ENCODE measurements at regions of chr7 and their contacts with region 1.

Region 1: DNA sequence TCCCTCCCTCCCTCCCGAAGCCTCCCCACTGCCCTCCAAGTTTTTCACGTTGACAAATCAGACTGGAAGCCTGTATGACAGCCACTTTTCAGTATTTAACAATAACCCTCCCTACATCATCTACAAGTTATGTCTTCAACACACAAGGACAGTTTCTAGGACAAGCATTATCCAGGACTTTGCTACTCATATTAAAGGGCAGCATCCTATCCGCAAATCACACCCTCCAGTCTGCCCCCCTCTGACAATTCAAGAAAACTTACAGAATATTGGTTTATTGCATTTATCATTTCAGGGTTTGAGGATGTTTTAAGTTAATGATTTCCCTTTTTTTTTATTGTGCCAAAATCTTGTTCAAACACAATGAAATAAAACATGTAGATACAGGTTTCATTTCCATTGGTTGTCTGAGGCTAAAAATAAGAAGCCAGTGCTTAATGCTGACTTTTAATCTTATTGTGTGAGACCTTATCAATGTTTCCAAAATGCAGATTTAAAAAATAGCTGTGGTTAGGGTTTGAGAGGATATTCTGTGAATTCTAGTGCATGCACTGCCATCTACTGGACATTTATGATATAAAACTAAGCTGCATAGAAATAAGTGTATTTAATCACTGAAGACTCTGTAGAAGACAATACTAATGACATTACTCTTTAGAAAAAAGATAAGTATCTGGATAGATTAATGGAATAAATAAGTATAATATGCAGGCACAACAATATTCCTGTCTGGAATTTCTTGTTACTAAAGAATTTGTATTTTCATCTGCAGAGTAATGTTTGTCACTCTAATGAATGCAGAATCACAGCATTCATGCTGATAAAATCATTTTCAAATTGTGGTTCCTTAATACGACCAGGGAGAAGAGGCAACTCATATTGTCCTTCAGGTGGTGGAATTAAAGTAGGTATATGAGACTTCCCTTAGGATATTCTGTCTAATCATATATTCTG is 64.1 kb downstream of the CAV1 start:
- DNase-seq: no peak
- H3K4me3 Mint-ChIP-seq: no peak overlapping the region
- H3K27ac Mint-ChIP-seq: no peak overlapping the region
- H3K4me1 Mint-ChIP-seq: peaks cover 25% of the 10 kb centered on the region
- H3K27me3 Mint-ChIP-seq: peaks cover 23% of the 10 kb centered on the region

Region 2: DNA sequence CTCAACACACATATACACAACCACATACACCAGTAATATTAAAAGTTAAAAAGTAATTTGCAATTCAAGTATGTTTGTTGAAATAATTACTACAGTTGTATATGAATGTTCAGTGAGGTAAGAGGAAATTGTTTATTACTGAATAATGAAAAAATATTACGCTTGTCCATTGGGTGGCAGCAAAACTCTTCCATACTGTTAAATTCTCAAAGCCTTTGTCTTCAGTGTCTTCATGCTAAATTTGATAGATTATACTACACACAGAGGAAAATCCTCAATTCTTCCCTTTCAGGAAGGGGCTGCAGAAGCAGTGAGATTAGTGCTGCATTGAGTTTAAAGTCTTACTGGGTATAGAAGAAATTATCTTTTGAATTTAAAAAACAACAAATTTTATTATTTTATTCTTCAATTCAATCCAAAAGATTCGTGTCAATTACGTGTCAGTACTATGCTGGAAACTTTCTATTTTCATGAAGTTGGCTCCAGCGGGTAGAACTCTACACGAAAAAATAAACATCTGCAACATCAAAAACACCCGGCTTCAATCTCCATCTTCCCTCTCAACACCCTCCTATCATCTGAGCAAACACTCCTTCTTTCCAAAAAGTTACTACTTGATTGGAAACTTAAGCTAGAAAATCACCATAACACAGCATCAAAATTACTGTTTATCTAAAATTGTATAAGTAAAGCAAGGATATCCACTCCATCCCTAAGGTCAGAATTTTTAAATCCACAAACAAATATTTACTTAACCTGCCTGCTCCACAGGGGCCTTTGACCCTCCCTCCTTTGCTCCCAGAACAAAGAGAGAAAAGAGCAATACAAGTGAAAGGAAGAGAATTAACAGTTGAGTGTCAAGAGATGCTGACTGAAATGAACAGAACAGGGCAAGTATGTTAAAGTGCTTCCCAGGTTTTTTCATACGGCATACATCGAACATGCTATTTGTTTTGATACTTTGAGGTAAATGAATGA is 415.6 kb before region 1 on chr7:
- CTCF ChIA-PET with region 1: interaction called, 13 read pairs
- POLR2A ChIA-PET with region 1: no interaction called
- DNase-seq: no peak
- H3K4me3 Mint-ChIP-seq: no peak overlapping the region
- H3K27ac Mint-ChIP-seq: no peak overlapping the region
- H3K4me1 Mint-ChIP-seq: peaks cover 7% of the 10 kb centered on the region
- H3K27me3 Mint-ChIP-seq: peaks cover 27% of the 10 kb centered on the region

Region 3: DNA sequence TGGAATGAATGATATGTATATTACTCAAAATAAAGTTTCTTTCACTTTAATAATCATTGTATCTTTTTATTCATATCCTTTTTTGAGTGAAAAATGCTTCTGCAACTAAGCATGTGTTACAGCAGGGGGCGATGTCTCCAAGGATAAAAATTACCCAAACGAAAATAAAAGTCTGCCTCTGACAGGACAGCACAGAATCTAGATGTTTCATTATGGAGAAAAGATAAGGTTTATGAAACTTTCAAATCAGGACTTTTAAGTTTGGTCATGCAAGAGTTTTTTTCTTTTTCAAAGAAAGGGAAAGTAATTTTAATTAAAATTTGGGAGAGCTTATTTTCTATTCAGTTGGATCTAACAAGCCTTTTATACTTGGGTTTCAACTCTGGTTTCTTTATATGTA is 330.2 kb before region 1 on chr7:
- CTCF ChIA-PET with region 1: interaction called, 21 read pairs
- POLR2A ChIA-PET with region 1: no interaction called
- DNase-seq: no peak
- H3K4me3 Mint-ChIP-seq: no peak overlapping the region
- H3K27ac Mint-ChIP-seq: no peak overlapping the region
- H3K4me1 Mint-ChIP-seq: peaks cover 11% of the 10 kb centered on the region
- H3K27me3 Mint-ChIP-seq: peaks cover 4% of the 10 kb centered on the region

Region 4: DNA sequence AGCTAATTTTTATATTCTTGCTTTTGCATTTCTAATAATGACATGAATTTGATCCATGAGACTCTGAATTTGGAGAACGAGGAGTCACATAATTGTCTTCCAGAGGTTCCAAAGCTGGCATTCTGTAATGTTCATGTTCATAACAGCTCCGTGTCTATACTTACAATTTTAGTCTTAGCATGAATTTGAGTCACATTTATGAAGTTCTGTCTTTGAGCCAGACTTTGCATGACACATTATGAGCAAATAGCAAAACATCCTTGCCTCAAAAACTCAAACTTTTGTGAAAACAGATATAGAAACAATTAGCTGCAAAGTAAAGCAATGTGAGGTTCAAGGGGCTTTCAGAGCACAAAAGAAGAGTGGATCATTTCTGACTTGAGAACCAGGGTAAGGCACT is 133.9 kb before region 1 on chr7:
- CTCF ChIA-PET with region 1: no interaction called
- POLR2A ChIA-PET with region 1: no interaction called
- DNase-seq: no peak
- H3K4me3 Mint-ChIP-seq: no peak overlapping the region
- H3K27ac Mint-ChIP-seq: no peak overlapping the region
- H3K4me1 Mint-ChIP-seq: no peaks in the 10 kb centered on the region
- H3K27me3 Mint-ChIP-seq: peaks cover 10% of the 10 kb centered on the region

Region 5: GRCh38 chr7:116525913-116526861 is 62.7 kb before region 1 on chr7:
- CTCF ChIA-PET with region 1: interaction called, 18 read pairs
- POLR2A ChIA-PET with region 1: no interaction called
- DNase-seq: peak; percentile 70
- H3K4me3 Mint-ChIP-seq: peak overlapping the region; percentile 75
- H3K27ac Mint-ChIP-seq: no peak overlapping the region
- H3K4me1 Mint-ChIP-seq: peaks cover 25% of the 10 kb centered on the region
- H3K27me3 Mint-ChIP-seq: peaks cover 75% of the 10 kb centered on the region

Region 6: GRCh38 chr7:116576350-116577319 is 12.3 kb before region 1 on chr7:
- CTCF ChIA-PET with region 1: interaction called, 12 read pairs
- POLR2A ChIA-PET with region 1: no interaction called
- DNase-seq: no peak
- H3K4me3 Mint-ChIP-seq: no peak overlapping the region
- H3K27ac Mint-ChIP-seq: no peak overlapping the region
- H3K4me1 Mint-ChIP-seq: peaks cover 14% of the 10 kb centered on the region
- H3K27me3 Mint-ChIP-seq: peaks cover 2% of the 10 kb centered on the region

Region 7: DNA sequence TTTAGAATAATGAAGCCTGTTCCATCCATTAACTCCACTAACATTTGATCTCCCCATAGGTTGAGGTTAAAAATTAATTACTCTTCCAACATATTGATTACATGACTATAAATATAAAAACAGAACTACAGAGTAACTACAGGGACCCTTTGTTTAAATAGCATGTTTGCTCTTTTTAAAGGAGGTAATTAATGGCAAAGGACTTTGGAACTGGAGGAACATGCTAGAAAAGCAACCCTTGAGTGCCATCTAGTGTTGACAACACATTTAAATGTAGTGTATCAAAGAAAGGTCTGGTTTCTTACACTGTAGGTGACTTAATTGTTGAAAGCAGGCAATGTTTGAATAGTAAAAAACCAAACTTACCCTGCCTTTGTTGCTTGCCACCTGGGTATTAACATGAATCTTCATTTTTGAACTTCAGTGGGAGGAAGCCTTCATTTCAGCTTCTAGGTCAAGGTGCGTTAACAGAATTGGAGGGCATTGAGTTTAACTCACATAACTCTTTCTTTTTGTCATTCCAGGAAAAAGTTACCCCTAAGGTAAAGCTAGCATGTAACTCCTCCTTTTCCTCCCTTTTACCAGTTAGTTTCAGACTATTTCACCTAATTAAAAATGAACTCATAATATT is 220.8 kb after region 1 on chr7:
- CTCF ChIA-PET with region 1: interaction called, 15 read pairs
- POLR2A ChIA-PET with region 1: no interaction called
- DNase-seq: no peak
- H3K4me3 Mint-ChIP-seq: no peak overlapping the region
- H3K27ac Mint-ChIP-seq: no peak overlapping the region
- H3K4me1 Mint-ChIP-seq: no peaks in the 10 kb centered on the region
- H3K27me3 Mint-ChIP-seq: peaks cover 8% of the 10 kb centered on the region